ENCODE measurements at regions of chr2 and their contacts with region 1.

Region 1: GRCh38 chr2:44267796-44268648 is 7.3 kb upstream of the SLC3A1 start:
- DNase-seq: peak; percentile 59 to 90
- H3K4me3 ChIP-seq: peak overlapping the region in 1 of 2 donors; percentile 2
- H3K27ac ChIP-seq: peak overlapping the region; percentile 88 to 91
- H3K4me1 ChIP-seq: peaks cover 0 to 54% (median 25%) of the 10 kb centered on the region in 4 donors
- H3K27me3 ChIP-seq: no peaks in the 10 kb centered on the region
- CTCF ChIP-seq: no peak

Region 2: GRCh38 chr2:43333656-43334144 is 934.3 kb before region 1 on chr2:
- intact Hi-C with region 1: loop called (anchors 10 kb)
- DNase-seq: no peak
- H3K4me3 ChIP-seq: no peak overlapping the region
- H3K27ac ChIP-seq: peak overlapping the region; percentile 59 to 80
- H3K4me1 ChIP-seq: peaks cover 0 to 80% (median 59%) of the 10 kb centered on the region in 4 donors
- H3K27me3 ChIP-seq: no peaks in the 10 kb centered on the region
- CTCF ChIP-seq: no peak

Region 3: GRCh38 chr2:43551990-43552389 is 716.0 kb before region 1 on chr2:
- intact Hi-C with region 1: no loop called
- DNase-seq: no peak
- H3K4me3 ChIP-seq: no peak overlapping the region
- H3K27ac ChIP-seq: no peak overlapping the region
- H3K4me1 ChIP-seq: no peaks in the 10 kb centered on the region
- H3K27me3 ChIP-seq: no peaks in the 10 kb centered on the region
- CTCF ChIP-seq: no peak